Dendritic cell treated with granulocyte-macrophage colony-stimulating factor and Interleukin-4, amounts not matched to agents 40 ng/mL and 50 ng/mL, for 4 days (primary cell): ENCODE measurements at regions of chrX and their contacts with region 1.

Region 1: GRCh38 chrX:119617517-119618164 is 11.4 kb upstream of the NKRF start:
- H3K4me3 Mint-ChIP-seq: peak overlapping the region; percentile 17
- H3K27ac Mint-ChIP-seq: peak overlapping the region; percentile 87
- H3K4me1 Mint-ChIP-seq: peaks cover 33% of the 10 kb centered on the region
- H3K27me3 Mint-ChIP-seq: no peaks in the 10 kb centered on the region

Region 2: DNA sequence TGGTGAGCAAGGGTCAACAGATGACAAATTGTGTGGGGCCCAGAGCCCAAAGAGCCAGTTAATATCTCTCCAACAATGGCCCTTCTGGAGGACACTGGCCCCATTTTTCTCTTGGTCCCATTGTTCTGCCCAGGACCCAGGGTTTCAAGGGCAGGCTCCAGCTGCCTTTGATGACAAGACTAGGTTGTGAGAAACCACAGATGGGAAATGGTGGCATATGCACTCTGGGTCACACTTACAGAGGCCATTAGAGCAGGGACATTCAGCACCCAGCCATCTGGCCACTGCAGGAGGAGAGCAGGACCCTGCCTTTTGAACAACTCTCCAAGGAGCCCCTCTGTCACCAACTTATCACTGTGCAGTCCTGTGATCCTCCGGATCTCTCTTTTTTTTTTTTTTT is 440.4 kb before region 1 on chrX:
- intact Hi-C with region 1: no loop called
- H3K4me3 Mint-ChIP-seq: no peak overlapping the region
- H3K27ac Mint-ChIP-seq: no peak overlapping the region
- H3K4me1 Mint-ChIP-seq: no peaks in the 10 kb centered on the region
- H3K27me3 Mint-ChIP-seq: no peaks in the 10 kb centered on the region

Region 3: DNA sequence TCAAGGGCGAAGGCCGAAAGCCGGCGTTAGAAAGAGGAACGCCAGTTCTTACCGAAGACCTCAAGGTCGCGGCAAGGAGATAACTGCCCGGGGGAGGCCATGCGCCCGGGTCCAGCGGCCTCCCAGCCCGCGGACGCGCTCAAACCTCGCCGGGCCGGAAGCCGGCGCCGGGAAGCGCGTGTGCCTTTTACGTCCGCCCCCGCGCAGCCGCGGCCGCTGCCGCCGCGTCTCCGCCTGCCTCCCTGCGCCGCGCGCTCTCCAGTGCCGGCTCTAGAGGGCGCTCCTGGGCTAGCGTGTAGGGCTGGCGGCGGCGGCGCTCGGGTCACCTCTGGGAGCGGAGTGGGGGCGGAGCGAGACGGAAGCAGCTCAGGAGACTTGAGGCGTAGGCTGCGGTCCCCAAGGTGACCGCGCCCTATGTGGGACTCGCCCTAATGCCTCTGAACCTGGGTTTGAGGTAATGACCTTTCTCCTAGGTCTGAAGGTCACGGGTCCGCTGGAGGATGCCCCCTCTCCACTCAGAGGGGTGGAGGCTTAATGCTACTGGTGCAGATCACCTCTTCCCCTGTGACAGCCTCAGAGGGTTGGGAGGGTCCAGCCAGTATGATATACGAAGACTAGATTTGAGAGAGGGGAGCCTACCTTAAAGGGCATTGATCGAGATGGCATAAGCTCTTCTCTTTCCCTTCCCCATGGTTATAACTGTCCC is 148.6 kb before region 1 on chrX:
- intact Hi-C with region 1: no loop called
- H3K4me3 Mint-ChIP-seq: peak overlapping the region; percentile 96
- H3K27ac Mint-ChIP-seq: peak overlapping the region; percentile 100
- H3K4me1 Mint-ChIP-seq: peaks cover 5% of the 10 kb centered on the region
- H3K27me3 Mint-ChIP-seq: no peaks in the 10 kb centered on the region

Region 4: GRCh38 chrX:119557385-119557784 is 60.3 kb before region 1 on chrX:
- intact Hi-C with region 1: no loop called
- H3K4me3 Mint-ChIP-seq: no peak overlapping the region
- H3K27ac Mint-ChIP-seq: no peak overlapping the region
- H3K4me1 Mint-ChIP-seq: no peaks in the 10 kb centered on the region
- H3K27me3 Mint-ChIP-seq: no peaks in the 10 kb centered on the region

Region 5: GRCh38 chrX:119729408-119730201 is 112.0 kb after region 1 on chrX:
- intact Hi-C with region 1: loop called (anchors 10 kb)
- H3K4me3 Mint-ChIP-seq: no peak overlapping the region
- H3K27ac Mint-ChIP-seq: no peak overlapping the region
- H3K4me1 Mint-ChIP-seq: peaks cover 2% of the 10 kb centered on the region
- H3K27me3 Mint-ChIP-seq: no peaks in the 10 kb centered on the region